Left colon (tissue), 2 donors: ENCODE measurements at regions of chr7 and their contacts with region 1.

Region 1: GRCh38 chr7:47266131-47266706 is 315.7 kb downstream of the TNS3 start:
- DNase-seq: peak; percentile 52 to 63
- ATAC-seq: peak; percentile 90

Region 2: GRCh38 chr7:46993396-46993795 is 272.8 kb before region 1 on chr7:
- intact Hi-C with region 1: no loop called
- DNase-seq: no peak
- ATAC-seq: no peak

Region 3: GRCh38 chr7:47435889-47436312 is 169.7 kb after region 1 on chr7:
- intact Hi-C with region 1: loop called in 1 of 2 experiments (anchors 5 kb)
- DNase-seq: peak; percentile 72
- ATAC-seq: peak; percentile 96

Region 4: DNA sequence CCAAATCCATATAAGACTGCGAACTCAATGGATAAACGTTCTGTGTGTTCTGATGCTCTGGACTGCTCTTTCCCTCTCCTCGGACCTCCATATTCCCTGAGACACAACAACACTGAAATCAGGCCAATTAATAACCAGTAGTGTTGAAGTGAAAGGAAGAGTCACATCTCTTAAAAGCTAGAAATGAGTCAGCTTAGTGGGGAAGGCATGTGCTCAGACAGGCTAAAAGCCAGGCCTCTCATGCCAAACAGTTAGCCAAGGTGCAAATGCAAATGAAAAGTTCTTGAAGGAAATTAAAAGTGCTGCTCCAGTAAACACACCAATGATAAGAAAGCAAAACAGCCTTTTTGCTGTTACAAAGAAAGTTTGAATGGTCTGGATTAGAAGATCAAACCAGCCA is 286.4 kb after region 1 on chr7:
- intact Hi-C with region 1: loop called in 1 of 2 experiments (anchors 10 kb)
- DNase-seq: no peak
- ATAC-seq: no peak

Region 5: DNA sequence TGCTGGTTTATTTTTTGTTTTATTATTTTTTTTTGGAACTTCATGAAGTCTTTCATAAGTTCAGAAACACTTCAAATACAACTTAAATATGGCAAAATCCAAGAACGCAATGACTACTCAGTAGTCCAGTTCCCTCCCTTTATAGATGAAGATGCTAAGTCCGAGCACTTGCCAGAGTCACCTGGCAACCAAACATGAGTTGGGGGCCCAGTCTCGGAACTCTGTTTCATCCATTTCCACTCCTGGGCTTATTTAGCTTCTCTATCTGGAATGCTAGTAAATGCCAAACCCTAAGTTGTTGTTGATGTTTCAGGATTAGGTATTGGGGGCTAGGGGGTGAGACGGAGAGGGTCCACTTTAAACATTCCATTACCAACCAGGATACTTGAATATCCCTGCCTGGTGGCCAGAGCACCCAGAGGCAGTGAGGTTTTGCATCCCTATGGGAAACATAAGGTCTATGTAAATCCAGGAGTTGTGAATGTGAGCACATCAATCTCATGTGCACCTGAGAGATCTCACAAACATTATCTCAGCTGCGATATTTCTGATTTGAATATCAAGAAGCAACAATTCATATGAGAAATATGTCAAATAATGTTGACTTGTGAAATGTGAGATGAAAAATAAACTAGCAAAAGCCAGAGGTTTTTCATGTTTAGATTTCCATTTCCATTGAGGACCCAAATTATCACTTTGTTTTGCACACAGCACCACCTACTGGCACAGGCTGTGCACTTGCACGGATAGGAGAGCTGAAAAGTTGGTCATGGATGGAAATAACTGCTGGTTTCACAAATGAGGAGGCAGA is 552.8 kb after region 1 on chr7:
- intact Hi-C with region 1: loop called (anchors 5 kb)
- DNase-seq: peak; percentile 41 to 77
- ATAC-seq: peak; percentile 75